SK-N-SH (cell line): ENCODE measurements at regions of chr9 and their contacts with region 1.

Region 1: GRCh38 chr9:124537926-124538325 is 30.7 kb upstream of the NR5A1 start:
- DNase-seq: no peak
- H3K4me3 ChIP-seq: no peak overlapping the region
- H3K27ac ChIP-seq: no peak overlapping the region
- H3K4me1 ChIP-seq: no peaks in the 10 kb centered on the region
- H3K27me3 ChIP-seq: no peaks in the 10 kb centered on the region
- CTCF ChIP-seq: no peak
- EP300 ChIP-seq: no peak
- RAD21 ChIP-seq: no peak

Region 2: GRCh38 chr9:124392871-124393460 is 145.0 kb before region 1 on chr9:
- CTCF ChIA-PET with region 1: interaction called, 35 read pairs
- POLR2A ChIA-PET with region 1: no interaction called
- DNase-seq: peak; percentile 77
- H3K4me3 ChIP-seq: peak overlapping the region in 1 of 2 experiments; percentile 28; a peak in 2 of 4 replicates
- H3K27ac ChIP-seq: peak overlapping the region; percentile 76 to 90
- H3K4me1 ChIP-seq: peaks cover 42 to 51% of the 10 kb centered on the region in 2 experiments
- H3K27me3 ChIP-seq: no peaks in the 10 kb centered on the region
- CTCF ChIP-seq: peak; percentile 69
- EP300 ChIP-seq: peak; percentile 41 to 96
- RAD21 ChIP-seq: peak; percentile 72

Region 3: GRCh38 chr9:124428751-124429529 is 109.0 kb before region 1 on chr9:
- CTCF ChIA-PET with region 1: interaction called, 13 read pairs
- POLR2A ChIA-PET with region 1: no interaction called
- DNase-seq: no peak
- H3K4me3 ChIP-seq: no peak overlapping the region
- H3K27ac ChIP-seq: no peak overlapping the region
- H3K4me1 ChIP-seq: peaks cover 0 to 6% of the 10 kb centered on the region in 2 experiments; a peak in 1 of 4 replicates
- H3K27me3 ChIP-seq: no peaks in the 10 kb centered on the region
- CTCF ChIP-seq: no peak
- EP300 ChIP-seq: no peak
- RAD21 ChIP-seq: no peak

Region 4: GRCh38 chr9:124513376-124513994 is 24.4 kb before region 1 on chr9:
- CTCF ChIA-PET with region 1: interaction called, 21 read pairs
- POLR2A ChIA-PET with region 1: no interaction called
- DNase-seq: peak; percentile 42
- H3K4me3 ChIP-seq: no peak overlapping the region
- H3K27ac ChIP-seq: no peak overlapping the region
- H3K4me1 ChIP-seq: peaks cover 0 to 31% of the 10 kb centered on the region in 2 experiments; a peak in 2 of 4 replicates
- H3K27me3 ChIP-seq: no peaks in the 10 kb centered on the region
- CTCF ChIP-seq: no peak
- EP300 ChIP-seq: no peak
- RAD21 ChIP-seq: no peak

Region 5: DNA sequence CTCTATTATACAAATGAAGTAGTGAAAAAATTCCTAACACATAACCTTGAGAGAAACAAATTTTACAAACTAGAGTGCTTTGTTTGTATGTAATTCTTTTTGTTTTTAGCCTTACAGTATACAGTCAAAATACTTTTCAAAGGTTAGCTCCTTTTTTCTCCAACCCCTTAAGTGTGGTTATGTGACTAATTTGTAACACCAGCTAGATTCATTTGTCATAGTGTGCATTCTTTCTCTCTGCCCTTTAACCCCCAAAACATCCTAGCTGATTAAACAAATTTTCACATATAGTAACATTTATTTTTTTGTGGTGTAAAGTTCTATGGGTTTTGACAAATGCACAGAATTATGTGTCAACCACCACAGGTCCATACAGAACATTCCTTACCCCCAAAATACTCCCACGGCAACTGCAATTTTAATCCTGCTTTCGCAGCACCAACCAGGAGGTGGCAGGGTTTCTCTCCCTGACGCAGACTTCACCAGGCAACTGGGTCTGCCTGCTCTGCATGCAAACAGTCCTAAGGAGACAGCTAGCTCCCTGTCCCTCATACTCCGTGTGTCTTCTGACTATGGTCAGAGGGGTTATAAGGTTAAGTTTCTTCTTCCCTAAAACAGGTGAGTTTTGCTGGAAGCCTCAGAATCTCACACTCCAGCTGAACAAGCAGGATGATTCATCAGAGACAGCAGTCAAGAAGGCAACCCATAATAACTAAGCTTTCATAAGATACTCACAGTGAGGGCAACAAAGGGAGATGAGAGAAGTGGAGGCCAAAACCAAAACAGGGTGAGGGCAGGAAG is 13.7 kb after region 1 on chr9:
- CTCF ChIA-PET with region 1: interaction called, 36 read pairs
- POLR2A ChIA-PET with region 1: no interaction called
- DNase-seq: peak; percentile 66
- H3K4me3 ChIP-seq: peak overlapping the region in 1 of 2 experiments; percentile 13; a peak in 1 of 4 replicates
- H3K27ac ChIP-seq: peak overlapping the region in 1 of 2 experiments; percentile 33; a peak in 2 of 4 replicates
- H3K4me1 ChIP-seq: peaks cover 3 to 5% of the 10 kb centered on the region in 2 experiments; a peak in 2 of 4 replicates
- H3K27me3 ChIP-seq: no peaks in the 10 kb centered on the region
- CTCF ChIP-seq: peak; percentile 88
- EP300 ChIP-seq: no peak
- RAD21 ChIP-seq: peak; percentile 87

Region 6: DNA sequence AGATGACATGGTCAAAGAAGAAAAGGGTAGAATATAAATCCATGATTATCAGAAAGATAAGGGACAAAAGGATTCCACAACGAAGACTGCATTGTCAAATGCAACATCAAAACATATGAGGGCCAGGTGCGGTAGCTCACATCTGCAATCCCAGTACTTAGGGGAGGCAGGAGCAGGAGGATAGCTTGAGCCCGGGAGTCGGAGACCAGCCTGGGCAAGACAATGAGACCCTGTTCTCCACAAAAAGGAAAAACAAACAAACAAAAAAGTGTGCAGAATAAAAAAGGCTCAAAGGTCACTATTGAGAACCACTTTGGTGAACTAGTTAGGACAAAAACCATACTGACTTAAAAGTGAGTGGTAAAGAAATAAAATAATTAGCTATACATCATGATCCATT is 29.4 kb after region 1 on chr9:
- CTCF ChIA-PET with region 1: interaction called, 11 read pairs
- POLR2A ChIA-PET with region 1: no interaction called
- DNase-seq: no peak
- H3K4me3 ChIP-seq: no peak overlapping the region
- H3K27ac ChIP-seq: no peak overlapping the region
- H3K4me1 ChIP-seq: peaks cover 7 to 12% of the 10 kb centered on the region in 2 experiments; a peak in 1 of 4 replicates
- H3K27me3 ChIP-seq: no peaks in the 10 kb centered on the region
- CTCF ChIP-seq: no peak
- EP300 ChIP-seq: no peak
- RAD21 ChIP-seq: no peak

Region 7: DNA sequence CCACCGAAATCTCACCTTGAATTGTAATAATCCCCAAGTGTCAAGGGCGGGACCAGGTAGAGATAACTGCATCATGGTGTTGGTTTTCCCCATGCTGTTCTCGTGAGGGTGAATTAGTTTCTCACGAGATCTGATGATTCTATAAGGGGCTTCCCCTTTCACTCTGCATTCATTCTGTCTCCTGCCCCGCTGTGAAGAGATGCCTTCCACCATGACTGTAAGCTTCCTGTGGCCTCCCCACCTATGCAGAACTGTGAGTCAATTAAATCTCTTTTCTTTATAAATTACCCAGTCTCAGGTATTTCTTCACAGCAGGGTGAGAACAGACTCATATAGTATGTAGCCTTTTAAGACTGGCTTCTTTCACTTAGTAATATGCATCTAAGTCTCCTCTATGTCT is 97.4 kb after region 1 on chr9:
- CTCF ChIA-PET with region 1: no interaction called
- POLR2A ChIA-PET with region 1: no interaction called
- DNase-seq: no peak
- H3K4me3 ChIP-seq: no peak overlapping the region
- H3K27ac ChIP-seq: no peak overlapping the region
- H3K4me1 ChIP-seq: peaks cover 0 to 7% of the 10 kb centered on the region in 2 experiments; a peak in 1 of 4 replicates
- H3K27me3 ChIP-seq: no peaks in the 10 kb centered on the region
- CTCF ChIP-seq: no peak
- EP300 ChIP-seq: no peak
- RAD21 ChIP-seq: no peak